K562 (cell line): ENCODE measurements at regions of chr6 and their contacts with region 1.

Region 1: DNA sequence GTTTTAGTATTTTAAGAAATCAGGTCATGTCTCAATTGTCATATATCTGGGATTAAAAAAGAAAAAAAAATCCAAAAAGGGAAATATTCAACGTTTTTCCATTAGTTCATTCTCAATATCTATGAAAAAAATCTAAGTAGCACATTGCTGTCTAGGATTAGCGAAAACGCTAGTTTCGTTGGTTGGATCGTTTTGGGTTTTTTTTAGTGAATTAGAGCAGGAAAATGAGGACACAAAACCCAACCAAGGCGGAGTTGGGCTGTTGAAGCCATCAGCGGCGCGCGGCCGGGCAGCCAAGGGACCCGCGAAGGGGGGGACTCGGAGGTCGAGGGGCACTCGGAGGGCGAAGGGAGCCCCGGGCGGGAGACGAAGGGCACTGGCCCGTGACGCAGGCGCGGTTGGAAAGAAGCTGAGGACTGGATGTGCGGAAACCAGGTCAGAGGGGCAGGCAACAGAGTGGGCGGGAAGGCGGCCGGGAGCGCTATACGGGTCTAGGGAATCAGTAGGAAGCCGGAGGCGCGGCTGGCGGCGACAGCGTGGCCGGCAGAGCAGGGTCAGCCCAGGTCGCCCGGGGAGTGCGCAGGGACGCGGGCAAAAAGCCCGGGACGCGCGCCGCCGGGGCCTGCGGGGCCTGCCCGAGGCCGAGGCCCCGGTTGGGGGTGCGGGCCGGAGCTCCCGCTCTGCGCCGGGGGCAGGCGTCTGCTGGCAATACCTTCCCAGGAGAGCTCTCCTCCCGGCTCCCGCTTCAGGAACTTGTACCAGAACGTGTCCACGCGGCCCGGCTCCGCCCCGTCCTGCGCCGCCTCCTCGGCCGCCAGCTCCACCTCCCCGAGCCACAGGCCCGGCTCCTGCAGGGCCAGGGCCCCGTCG is 599 bp downstream of the EPM2A start:
- DNase-seq: peak; percentile 82 to 92 (median 83)
- ATAC-seq: peak; percentile 87
- H3K4me3 ChIP-seq: peak overlapping the region; percentile 54
- H3K27ac ChIP-seq: peak overlapping the region; percentile 92
- H3K4me1 ChIP-seq: peaks cover 16 to 21% of the 10 kb centered on the region in 2 experiments; a peak in 3 of 5 replicates
- H3K27me3 ChIP-seq: no peaks in the 10 kb centered on the region
- CTCF ChIP-seq: no peak
- EP300 ChIP-seq: no peak
- POLR2A ChIP-seq: peak; percentile 87
- RAD21 ChIP-seq: no peak

Region 2: GRCh38 chr6:145704143-145704781 is 30.5 kb before region 1 on chr6:
- CTCF ChIA-PET with region 1: no interaction called
- POLR2A ChIA-PET with region 1: no interaction called
- in situ Hi-C with region 1: no loop called
- intact Hi-C with region 1: no loop called
- DNase-seq: peak in 2 of 4 experiments; percentile 11 to 16
- ATAC-seq: no peak
- H3K4me3 ChIP-seq: no peak overlapping the region
- H3K27ac ChIP-seq: no peak overlapping the region
- H3K4me1 ChIP-seq: no peaks in the 10 kb centered on the region
- H3K27me3 ChIP-seq: no peaks in the 10 kb centered on the region
- CTCF ChIP-seq: peak in 2 of 3 experiments; percentile 20 to 61; a peak in 3 of 6 replicates
- EP300 ChIP-seq: no peak
- POLR2A ChIP-seq: no peak
- RAD21 ChIP-seq: peak; percentile 31 to 47

Region 3: DNA sequence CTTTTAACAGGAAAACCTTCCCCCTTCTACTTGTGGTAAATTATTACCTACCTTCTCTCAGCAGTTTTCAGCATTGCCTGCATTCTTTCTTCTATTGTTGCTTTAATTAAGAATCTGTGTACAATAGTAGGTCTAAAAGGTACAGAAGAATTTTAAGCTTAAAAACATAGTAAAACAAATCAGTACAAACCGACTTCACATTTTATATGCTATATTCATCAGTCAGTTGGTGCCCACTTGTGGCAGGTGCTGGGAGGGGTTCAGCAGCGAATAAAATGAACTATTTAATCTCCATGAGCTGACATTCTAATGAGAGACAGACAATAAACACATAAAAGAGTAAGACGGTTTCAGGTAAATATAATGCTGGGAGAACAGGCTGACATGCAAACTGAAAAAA is 153.2 kb after region 1 on chr6:
- CTCF ChIA-PET with region 1: interaction called, 3 read pairs
- POLR2A ChIA-PET with region 1: interaction called, 3 read pairs
- in situ Hi-C with region 1: no loop called
- intact Hi-C with region 1: loop called (anchors 5 kb)
- DNase-seq: peak in 1 of 4 experiments; percentile 13
- ATAC-seq: peak; percentile 59; the same call in 1 of the 3 replicates
- H3K4me3 ChIP-seq: no peak overlapping the region
- H3K27ac ChIP-seq: no peak overlapping the region
- H3K4me1 ChIP-seq: no peaks in the 10 kb centered on the region
- H3K27me3 ChIP-seq: no peaks in the 10 kb centered on the region
- CTCF ChIP-seq: peak; percentile 24 to 67 (median 64); a peak in 3 of 6 replicates
- EP300 ChIP-seq: no peak
- POLR2A ChIP-seq: no peak
- RAD21 ChIP-seq: peak; percentile 51 to 64

Region 4: GRCh38 chr6:145963216-145964068 is 228.7 kb after region 1 on chr6:
- CTCF ChIA-PET with region 1: no interaction called
- POLR2A ChIA-PET with region 1: interaction called, 5 read pairs
- in situ Hi-C with region 1: no loop called
- intact Hi-C with region 1: loop called (anchors 2 kb)
- DNase-seq: peak; percentile 55 to 67 (median 56)
- ATAC-seq: peak; percentile 66
- H3K4me3 ChIP-seq: peak overlapping the region; percentile 74
- H3K27ac ChIP-seq: peak overlapping the region; percentile 92
- H3K4me1 ChIP-seq: peaks cover 8 to 34% of the 10 kb centered on the region in 2 experiments; a peak in 4 of 5 replicates
- H3K27me3 ChIP-seq: no peaks in the 10 kb centered on the region
- CTCF ChIP-seq: no peak
- EP300 ChIP-seq: no peak; the same call in 1 of the 2 replicates
- POLR2A ChIP-seq: no peak
- RAD21 ChIP-seq: no peak

Region 5: DNA sequence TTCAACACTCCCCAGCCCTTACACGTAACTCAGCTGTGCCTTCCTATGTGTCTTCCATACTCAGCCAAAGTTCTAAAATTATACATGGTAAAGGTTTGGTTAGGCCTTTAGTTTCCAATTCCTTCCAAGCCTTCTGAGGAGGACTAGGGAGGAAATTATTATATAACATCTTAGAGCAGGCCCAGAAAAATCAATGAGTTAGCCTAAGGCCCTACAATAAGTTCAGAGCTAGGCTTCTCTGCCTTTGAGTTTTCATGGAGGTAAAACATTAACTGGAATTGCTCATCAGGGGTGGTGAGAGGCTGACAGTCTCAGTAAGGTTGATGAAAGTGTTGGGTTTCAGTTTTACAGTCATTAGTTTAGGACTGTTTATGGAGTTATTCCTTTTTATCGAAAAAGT is 1150.0 kb after region 1 on chr6:
- CTCF ChIA-PET with region 1: no interaction called
- POLR2A ChIA-PET with region 1: interaction called, 3 read pairs
- in situ Hi-C with region 1: no loop called
- intact Hi-C with region 1: loop called (anchors 10 kb)
- DNase-seq: peak in 1 of 4 experiments; percentile 75
- ATAC-seq: peak; percentile 27
- H3K4me3 ChIP-seq: peak overlapping the region; percentile 31
- H3K27ac ChIP-seq: peak overlapping the region; percentile 89
- H3K4me1 ChIP-seq: peaks cover 45 to 83% of the 10 kb centered on the region in 2 experiments
- H3K27me3 ChIP-seq: no peaks in the 10 kb centered on the region
- CTCF ChIP-seq: no peak; a peak in 1 of 6 replicates
- EP300 ChIP-seq: no peak
- POLR2A ChIP-seq: no peak
- RAD21 ChIP-seq: no peak